ENCODE measurements at regions of chr3 and their contacts with region 1.

Region 1: GRCh38 chr3:158683216-158683962 is 10.9 kb upstream of the LXN start:
- DNase-seq: no peak
- ATAC-seq: peak; percentile 60
- H3K4me3 Mint-ChIP-seq: no peak overlapping the region
- H3K27ac Mint-ChIP-seq: no peak overlapping the region
- H3K4me1 Mint-ChIP-seq: peaks cover 3% of the 10 kb centered on the region
- H3K27me3 Mint-ChIP-seq: no peaks in the 10 kb centered on the region

Region 2: GRCh38 chr3:158330870-158331269 is 352.5 kb before region 1 on chr3:
- CTCF ChIA-PET with region 1: no interaction called
- POLR2A ChIA-PET with region 1: no interaction called
- intact Hi-C with region 1: no loop called
- DNase-seq: no peak
- ATAC-seq: no peak
- H3K4me3 Mint-ChIP-seq: no peak overlapping the region
- H3K27ac Mint-ChIP-seq: no peak overlapping the region
- H3K4me1 Mint-ChIP-seq: peaks cover 5% of the 10 kb centered on the region
- H3K27me3 Mint-ChIP-seq: no peaks in the 10 kb centered on the region

Region 3: GRCh38 chr3:158659454-158660237 is 23.7 kb before region 1 on chr3:
- CTCF ChIA-PET with region 1: interaction called, 15 read pairs
- POLR2A ChIA-PET with region 1: no interaction called
- intact Hi-C with region 1: loop called in 1 of 2 experiments (anchors 1 kb)
- DNase-seq: peak; percentile 76
- ATAC-seq: peak; percentile 97
- H3K4me3 Mint-ChIP-seq: no peak overlapping the region
- H3K27ac Mint-ChIP-seq: no peak overlapping the region
- H3K4me1 Mint-ChIP-seq: peaks cover 11% of the 10 kb centered on the region
- H3K27me3 Mint-ChIP-seq: no peaks in the 10 kb centered on the region

Region 4: GRCh38 chr3:158709666-158710083 is 26.3 kb after region 1 on chr3:
- CTCF ChIA-PET with region 1: no interaction called
- POLR2A ChIA-PET with region 1: no interaction called
- intact Hi-C with region 1: no loop called
- DNase-seq: no peak
- ATAC-seq: no peak
- H3K4me3 Mint-ChIP-seq: no peak overlapping the region
- H3K27ac Mint-ChIP-seq: no peak overlapping the region
- H3K4me1 Mint-ChIP-seq: peaks cover 30% of the 10 kb centered on the region
- H3K27me3 Mint-ChIP-seq: no peaks in the 10 kb centered on the region

Measured in activated CD4-positive, alpha-beta T cell treated with anti-CD3 and anti-CD28 coated beads for 36 hours (primary cell).